ENCODE measurements at regions of chr2 and their contacts with region 1.

Region 1: GRCh38 chr2:28958689-28959088 is 22.4 kb upstream of the TOGARAM2 start:
- DNase-seq: peak; percentile 71
- H3K4me3 ChIP-seq: no peak overlapping the region
- H3K27ac ChIP-seq: no peak overlapping the region
- H3K4me1 ChIP-seq: no peaks in the 10 kb centered on the region
- H3K27me3 ChIP-seq: no peaks in the 10 kb centered on the region
- CTCF ChIP-seq: peak; percentile 49 to 58

Region 2: DNA sequence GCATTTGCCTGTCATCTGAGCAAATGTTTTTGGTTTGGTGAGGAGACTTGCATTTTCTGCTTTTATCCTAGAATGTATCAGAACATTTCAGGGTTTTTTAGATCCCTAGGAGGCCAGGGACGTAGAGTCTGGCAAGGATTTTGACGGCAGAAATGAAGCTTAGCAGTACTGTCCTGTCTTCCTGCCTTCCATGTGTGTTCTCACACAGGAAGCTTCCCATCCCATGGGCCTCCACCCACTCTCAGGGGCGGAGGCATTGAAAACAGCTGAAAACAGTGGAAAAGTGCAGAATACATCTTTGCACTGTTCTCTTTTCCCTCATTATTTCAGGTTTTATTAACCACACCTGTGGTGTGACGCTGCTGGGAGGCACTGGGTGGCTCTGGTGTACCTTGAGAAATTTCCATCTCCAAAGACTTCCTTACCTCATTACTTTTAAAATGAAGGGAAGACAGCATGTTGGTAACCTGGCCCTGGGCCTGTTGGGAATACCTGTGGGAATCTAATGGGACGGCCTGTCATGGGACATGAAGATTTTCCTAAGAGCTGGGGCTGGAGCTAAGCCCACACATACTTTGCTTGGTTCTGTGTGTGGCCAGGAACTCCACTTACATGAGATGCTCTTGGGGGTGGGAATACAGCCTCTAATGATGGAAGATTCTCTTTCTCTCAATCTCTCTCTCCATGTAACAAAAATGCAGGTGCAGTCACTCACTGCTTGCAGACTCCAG is 95.1 kb after region 1 on chr2:
- CTCF ChIA-PET with region 1: no interaction called
- dilution Hi-C with region 1: no loop called
- in situ Hi-C with region 1: no loop called
- intact Hi-C with region 1: loop called (anchors 2 kb)
- DNase-seq: peak; percentile 41
- H3K4me3 ChIP-seq: no peak overlapping the region
- H3K27ac ChIP-seq: no peak overlapping the region
- H3K4me1 ChIP-seq: peaks cover 21% of the 10 kb centered on the region
- H3K27me3 ChIP-seq: no peaks in the 10 kb centered on the region
- CTCF ChIP-seq: peak; percentile 52 to 74

Region 3: GRCh38 chr2:29174937-29175336 is 216.2 kb after region 1 on chr2:
- CTCF ChIA-PET with region 1: no interaction called
- dilution Hi-C with region 1: loop called (anchors 10 kb)
- in situ Hi-C with region 1: no loop called
- intact Hi-C with region 1: no loop called
- DNase-seq: no peak
- H3K4me3 ChIP-seq: no peak overlapping the region
- H3K27ac ChIP-seq: no peak overlapping the region
- H3K4me1 ChIP-seq: no peaks in the 10 kb centered on the region
- H3K27me3 ChIP-seq: no peaks in the 10 kb centered on the region
- CTCF ChIP-seq: no peak

Region 4: GRCh38 chr2:29309090-29310029 is 350.7 kb after region 1 on chr2:
- CTCF ChIA-PET with region 1: no interaction called
- dilution Hi-C with region 1: no loop called
- in situ Hi-C with region 1: no loop called
- intact Hi-C with region 1: loop called (anchors 5 kb)
- DNase-seq: peak; percentile 47
- H3K4me3 ChIP-seq: no peak overlapping the region
- H3K27ac ChIP-seq: no peak overlapping the region
- H3K4me1 ChIP-seq: no peaks in the 10 kb centered on the region
- H3K27me3 ChIP-seq: peaks cover 2% of the 10 kb centered on the region
- CTCF ChIP-seq: peak; percentile 89

Region 5: GRCh38 chr2:30026087-30027055 is 1067.7 kb after region 1 on chr2:
- CTCF ChIA-PET with region 1: no interaction called
- dilution Hi-C with region 1: no loop called
- in situ Hi-C with region 1: no loop called
- intact Hi-C with region 1: loop called (anchors 1 kb)
- DNase-seq: peak; percentile 95
- H3K4me3 ChIP-seq: no peak overlapping the region
- H3K27ac ChIP-seq: no peak overlapping the region
- H3K4me1 ChIP-seq: peaks cover 13% of the 10 kb centered on the region
- H3K27me3 ChIP-seq: no peaks in the 10 kb centered on the region
- CTCF ChIP-seq: peak; percentile 63 to 81

Measured in mammary epithelial cell (primary cell).